ENCODE measurements at regions of chr17 and their contacts with region 1.

Region 1: GRCh38 chr17:44919885-44920564 is 4.7 kb upstream of the GFAP start:
- DNase-seq: no peak
- H3K4me3 ChIP-seq: no peak overlapping the region
- H3K27ac ChIP-seq: no peak overlapping the region
- H3K4me1 ChIP-seq: peaks cover 29% of the 10 kb centered on the region
- H3K27me3 ChIP-seq: no peaks in the 10 kb centered on the region
- CTCF ChIP-seq: peak; percentile 82 to 95 (median 88)

Region 2: DNA sequence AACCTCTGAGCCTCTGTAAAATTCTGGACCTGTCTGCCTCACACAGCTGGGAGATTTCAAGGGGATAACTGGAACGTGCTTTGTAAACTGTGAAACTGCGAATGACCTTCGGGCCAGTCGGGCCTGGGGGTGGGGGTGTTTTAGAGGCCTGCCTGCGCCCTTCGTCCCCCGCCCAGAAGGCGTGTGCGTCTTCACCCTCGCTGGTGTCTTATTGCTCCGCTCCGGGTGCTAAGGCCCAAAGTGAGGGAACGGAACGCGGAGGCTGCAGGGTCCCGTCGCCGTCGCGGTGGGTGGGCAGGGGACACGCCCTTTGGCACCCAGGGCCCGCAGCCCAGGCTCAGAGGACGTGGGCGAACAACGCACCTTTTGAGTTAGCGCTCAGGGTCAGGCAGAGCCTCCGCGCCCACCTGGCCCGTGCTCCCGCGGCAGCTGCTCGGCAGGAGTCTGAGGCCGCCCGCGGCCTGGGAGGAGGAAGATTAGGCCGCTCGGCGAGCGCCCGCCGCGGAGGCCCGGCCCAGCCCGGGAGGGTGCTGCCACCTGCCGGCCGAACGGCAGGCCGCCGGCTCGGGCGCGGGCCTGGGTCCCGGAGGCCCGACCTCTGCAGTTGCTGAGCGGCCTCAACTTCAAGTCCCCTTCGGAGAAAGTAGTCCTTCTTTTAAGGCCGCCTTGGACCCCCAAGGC is 101.7 kb after region 1 on chr17:
- dilution Hi-C with region 1: loop called (anchors 25 kb)
- DNase-seq: no peak
- H3K4me3 ChIP-seq: peak overlapping the region in 1 of 3 experiments; percentile 53
- H3K27ac ChIP-seq: no peak overlapping the region
- H3K4me1 ChIP-seq: peaks cover 21% of the 10 kb centered on the region
- H3K27me3 ChIP-seq: no peaks in the 10 kb centered on the region
- CTCF ChIP-seq: peak; percentile 65 to 79 (median 76)

Measured in keratinocyte (primary cell).